Activated naive CD4-positive, alpha-beta T cell treated with anti-CD3 and anti-CD28 coated beads for 36 hours (primary cell): ENCODE measurements at regions of chr12 and their contacts with region 1.

Region 1: DNA sequence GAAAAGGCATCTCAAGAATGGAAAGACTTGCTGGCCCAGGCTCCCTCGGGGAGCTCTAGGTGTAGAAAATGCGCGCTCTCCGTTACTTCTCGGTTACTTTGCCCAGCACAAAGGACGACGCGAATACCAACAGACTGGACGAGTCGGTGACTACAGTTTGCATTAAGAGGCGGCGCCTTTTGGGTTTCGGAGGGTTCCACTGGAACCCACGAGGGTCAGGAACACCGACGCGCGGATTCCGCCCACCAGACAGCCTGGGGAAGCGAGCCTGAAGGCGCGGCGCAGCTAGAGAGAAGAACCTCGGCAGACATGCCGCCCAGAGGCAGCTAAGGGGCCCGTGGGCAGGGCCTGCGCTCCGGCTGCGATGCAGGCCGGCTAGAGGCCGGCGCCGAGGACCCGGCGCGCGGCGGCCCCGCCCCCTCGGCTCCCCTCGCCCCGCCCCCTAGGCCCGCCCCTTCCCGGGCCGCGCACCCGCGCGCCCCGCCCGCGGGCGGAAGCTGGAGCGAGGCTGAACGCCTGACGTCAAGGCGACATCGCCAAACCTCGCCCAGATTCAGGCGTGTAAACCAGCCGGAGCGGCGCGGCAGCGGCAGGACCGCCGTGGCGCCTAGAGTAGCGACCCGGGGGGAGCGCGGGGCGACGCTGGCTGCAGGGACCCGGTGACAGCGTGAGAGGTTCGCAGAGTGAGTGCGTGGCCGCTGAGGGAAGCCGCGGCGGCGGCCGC is at the start of gene RAP1B:
- DNase-seq: peak; percentile 89
- H3K4me3 Mint-ChIP-seq: peak within 1 kb of the TSS; percentile 91
- H3K27ac Mint-ChIP-seq: peak within 1 kb of the TSS; percentile 98
- H3K4me1 Mint-ChIP-seq: peaks cover 37% of the 10 kb centered on the region
- H3K27me3 Mint-ChIP-seq: no peaks in the 10 kb centered on the region
- total RNA-seq, gene RAP1B: 170 TPM

Region 2: DNA sequence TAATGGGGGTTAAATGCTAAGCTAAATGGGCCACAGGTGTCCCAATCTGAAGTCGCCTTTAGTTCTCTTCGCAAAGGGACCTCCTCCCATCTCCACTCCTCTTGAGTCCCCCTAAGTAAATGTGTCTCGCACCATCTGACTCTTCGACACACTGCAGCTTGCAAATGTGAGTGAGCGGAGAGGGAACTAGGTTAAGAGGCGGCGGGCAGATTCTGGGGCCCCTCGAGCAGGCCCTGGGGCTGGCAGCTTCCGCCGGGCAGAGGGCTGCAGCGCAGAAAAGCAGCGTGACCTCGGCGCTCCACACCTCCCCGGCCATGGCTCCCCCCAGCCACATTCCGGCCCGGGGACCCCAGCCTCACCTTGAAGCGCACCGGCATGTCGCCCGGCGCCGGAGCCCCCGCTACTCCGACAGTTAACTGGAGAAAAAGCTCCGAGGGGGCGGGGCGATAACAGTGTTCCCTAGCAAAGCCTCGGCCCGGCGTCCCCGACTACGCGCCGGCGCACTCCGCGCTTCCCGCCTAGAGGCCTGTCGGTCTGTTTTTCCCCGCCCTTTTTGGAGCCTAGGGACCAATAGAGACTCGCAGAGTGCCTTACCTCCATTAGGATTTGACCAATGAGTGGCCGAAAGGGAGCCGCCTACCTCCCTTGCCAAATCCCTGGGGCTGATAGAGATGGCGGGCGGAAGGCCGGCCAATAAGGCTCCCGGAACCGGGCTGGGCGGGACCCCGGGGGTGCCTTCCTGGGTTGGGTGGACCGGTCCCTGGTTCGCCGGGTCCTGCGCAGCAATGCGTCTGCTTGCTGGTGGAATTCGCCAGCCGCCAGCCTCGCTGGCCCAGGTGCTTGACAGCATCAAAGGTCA is 278.4 kb before region 1 on chr12 and contains the start of gene MDM1:
- CTCF ChIA-PET with region 1: interaction called, 3 read pairs
- intact Hi-C with region 1: loop called (anchors 1 kb)
- DNase-seq: peak; percentile 96
- H3K4me3 Mint-ChIP-seq: peak within 1 kb of the TSS; percentile 84
- H3K27ac Mint-ChIP-seq: peak within 1 kb of the TSS; percentile 73
- H3K4me1 Mint-ChIP-seq: peaks cover 47% of the 10 kb centered on the region
- H3K27me3 Mint-ChIP-seq: no peaks in the 10 kb centered on the region
- total RNA-seq, gene MDM1: 16.5 to 20.8 TPM

Region 3: GRCh38 chr12:68440068-68440581 is 170.4 kb before region 1 on chr12:
- CTCF ChIA-PET with region 1: no interaction called
- intact Hi-C with region 1: no loop called
- DNase-seq: no peak
- H3K4me3 Mint-ChIP-seq: no peak overlapping the region
- H3K27ac Mint-ChIP-seq: no peak overlapping the region
- H3K4me1 Mint-ChIP-seq: peaks cover 17% of the 10 kb centered on the region
- H3K27me3 Mint-ChIP-seq: no peaks in the 10 kb centered on the region

Region 4: DNA sequence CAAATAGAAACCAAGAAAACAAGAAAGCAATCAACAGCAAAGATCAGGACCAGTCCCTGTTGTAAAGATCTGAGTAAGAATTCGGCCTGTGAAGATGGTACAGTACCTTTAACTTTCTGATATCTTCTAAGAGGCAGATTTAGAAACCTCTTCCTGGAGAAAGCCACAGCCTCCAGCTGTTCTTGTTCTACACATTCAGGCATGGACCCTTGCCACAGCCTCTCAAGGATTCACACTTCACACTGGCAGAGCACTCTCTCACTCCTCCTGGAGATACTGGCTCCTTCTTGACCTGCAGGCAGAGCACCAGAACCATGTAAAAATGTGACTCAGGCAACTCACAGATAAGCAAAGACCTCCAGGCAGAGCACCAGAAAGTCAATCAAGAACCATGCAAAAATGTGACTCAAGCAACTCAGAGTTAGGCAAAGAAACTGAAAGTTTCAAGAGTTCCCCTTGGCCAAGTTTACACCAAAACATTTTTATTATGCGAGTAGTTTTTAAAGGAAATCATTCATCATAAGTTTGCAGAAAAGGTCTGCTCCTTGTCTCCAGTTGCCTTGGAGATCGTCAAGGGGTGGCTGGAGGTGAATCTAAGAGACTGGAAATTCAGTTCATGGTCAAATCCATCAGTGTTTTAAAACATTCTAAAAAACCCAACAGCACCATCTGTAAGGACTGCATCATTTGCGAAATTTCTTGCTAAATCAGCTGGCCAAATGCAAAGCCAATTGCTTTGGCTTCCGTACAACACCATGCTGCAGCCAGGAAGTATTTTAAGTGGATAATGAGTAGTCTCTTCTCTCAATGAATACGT is 159.1 kb before region 1 on chr12:
- CTCF ChIA-PET with region 1: interaction called, 3 read pairs
- intact Hi-C with region 1: loop called (anchors 1 kb)
- DNase-seq: peak; percentile 71
- H3K4me3 Mint-ChIP-seq: peak overlapping the region; percentile 45
- H3K27ac Mint-ChIP-seq: peak overlapping the region; percentile 96
- H3K4me1 Mint-ChIP-seq: peaks cover 91% of the 10 kb centered on the region
- H3K27me3 Mint-ChIP-seq: no peaks in the 10 kb centered on the region

Region 5: GRCh38 chr12:68587448-68587873 is 23.1 kb before region 1 on chr12:
- CTCF ChIA-PET with region 1: interaction called, 3 read pairs
- intact Hi-C with region 1: loop called (anchors 1 kb)
- DNase-seq: peak; percentile 81
- H3K4me3 Mint-ChIP-seq: no peak overlapping the region
- H3K27ac Mint-ChIP-seq: peak overlapping the region; percentile 27
- H3K4me1 Mint-ChIP-seq: peaks cover 55% of the 10 kb centered on the region
- H3K27me3 Mint-ChIP-seq: no peaks in the 10 kb centered on the region

Region 6: DNA sequence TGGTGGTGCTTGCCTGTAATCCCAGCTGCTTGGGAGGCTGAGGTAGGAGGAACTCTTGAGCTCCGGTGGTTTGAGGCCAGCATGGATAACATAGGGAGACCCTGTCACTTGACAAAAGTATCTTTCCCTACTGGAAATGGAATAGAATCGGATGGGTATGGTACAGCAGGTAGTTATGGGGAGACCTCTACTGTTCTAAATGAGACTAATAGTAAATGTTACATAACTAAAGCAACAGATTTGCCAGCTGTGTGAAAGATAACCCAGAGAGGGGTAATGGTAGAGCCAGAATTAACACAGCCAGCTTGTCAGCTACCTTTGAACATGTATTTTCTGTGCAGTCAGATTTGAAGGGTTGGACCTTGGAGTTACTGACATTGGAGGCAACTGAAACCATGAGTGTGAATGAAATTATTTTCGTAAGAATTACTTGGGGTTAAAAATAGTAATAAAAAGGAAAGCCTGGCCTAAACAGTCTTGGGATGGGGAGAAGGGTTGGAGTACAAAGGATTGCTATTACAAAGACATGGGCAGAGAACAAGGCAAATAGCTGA is 54.6 kb after region 1 on chr12:
- CTCF ChIA-PET with region 1: no interaction called
- intact Hi-C with region 1: no loop called
- DNase-seq: no peak
- H3K4me3 Mint-ChIP-seq: no peak overlapping the region
- H3K27ac Mint-ChIP-seq: no peak overlapping the region
- H3K4me1 Mint-ChIP-seq: peaks cover 30% of the 10 kb centered on the region
- H3K27me3 Mint-ChIP-seq: no peaks in the 10 kb centered on the region

Region 7: GRCh38 chr12:68675101-68675842 is 64.7 kb after region 1 on chr12:
- CTCF ChIA-PET with region 1: no interaction called
- intact Hi-C with region 1: loop called (anchors 1 kb)
- DNase-seq: peak; percentile 85
- H3K4me3 Mint-ChIP-seq: peak overlapping the region; percentile 29
- H3K27ac Mint-ChIP-seq: peak overlapping the region; percentile 85
- H3K4me1 Mint-ChIP-seq: peaks cover 52% of the 10 kb centered on the region
- H3K27me3 Mint-ChIP-seq: no peaks in the 10 kb centered on the region

Region 8: DNA sequence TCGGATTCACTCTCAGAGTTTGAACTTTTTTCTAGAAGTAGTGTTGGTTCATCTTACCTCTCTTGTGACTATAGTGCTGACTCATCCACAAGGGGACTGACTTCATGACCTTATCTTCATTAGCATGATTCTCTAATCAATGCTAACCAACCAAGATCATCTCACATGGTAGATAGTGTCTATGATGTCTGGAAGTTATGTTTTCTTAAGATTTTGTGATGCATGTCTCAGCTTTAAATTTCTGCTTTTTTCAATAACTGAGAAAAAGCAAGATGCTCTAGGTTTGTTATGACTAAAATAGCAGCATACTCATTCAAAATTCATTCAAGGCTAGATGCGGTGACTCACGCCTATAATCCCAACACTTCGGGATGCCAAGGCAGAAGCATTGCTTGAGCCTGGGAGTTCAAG is 123.1 kb after region 1 on chr12:
- CTCF ChIA-PET with region 1: no interaction called
- intact Hi-C with region 1: no loop called
- DNase-seq: no peak
- H3K4me3 Mint-ChIP-seq: no peak overlapping the region
- H3K27ac Mint-ChIP-seq: no peak overlapping the region
- H3K4me1 Mint-ChIP-seq: no peaks in the 10 kb centered on the region
- H3K27me3 Mint-ChIP-seq: no peaks in the 10 kb centered on the region

Region 9: DNA sequence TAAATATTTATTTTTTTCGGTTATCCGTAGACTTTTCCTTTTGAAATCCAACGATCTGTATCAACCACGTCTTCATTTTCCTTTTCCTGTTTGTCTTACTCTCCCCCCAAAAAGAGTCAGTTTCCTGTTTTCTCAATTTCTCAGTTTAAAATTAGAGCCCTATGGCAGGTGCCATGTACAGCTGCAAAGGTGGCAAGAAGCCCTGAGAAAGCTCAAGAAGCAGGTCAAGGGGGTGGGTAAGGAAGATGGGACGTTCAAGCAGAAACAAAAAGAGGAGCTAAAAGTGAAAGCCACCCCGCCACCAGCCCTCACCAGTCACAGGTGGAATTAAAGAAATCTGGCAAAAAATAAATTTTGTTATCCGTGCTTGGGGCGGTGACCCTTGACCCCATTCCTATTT is 162.2 kb after region 1 on chr12:
- CTCF ChIA-PET with region 1: no interaction called
- intact Hi-C with region 1: no loop called
- DNase-seq: no peak
- H3K4me3 Mint-ChIP-seq: peak overlapping the region; percentile 56
- H3K27ac Mint-ChIP-seq: peak overlapping the region; percentile 19
- H3K4me1 Mint-ChIP-seq: peaks cover 17% of the 10 kb centered on the region
- H3K27me3 Mint-ChIP-seq: no peaks in the 10 kb centered on the region

Region 10: GRCh38 chr12:68958322-68958721 is 347.8 kb after region 1 on chr12:
- CTCF ChIA-PET with region 1: no interaction called
- intact Hi-C with region 1: loop called (anchors 5 kb)
- DNase-seq: peak; percentile 80
- H3K4me3 Mint-ChIP-seq: peak overlapping the region; percentile 34
- H3K27ac Mint-ChIP-seq: peak overlapping the region; percentile 98
- H3K4me1 Mint-ChIP-seq: peaks cover 54% of the 10 kb centered on the region
- H3K27me3 Mint-ChIP-seq: no peaks in the 10 kb centered on the region